Panc1 (cell line): ENCODE measurements at regions of chr10 and their contacts with region 1.

Region 1: DNA sequence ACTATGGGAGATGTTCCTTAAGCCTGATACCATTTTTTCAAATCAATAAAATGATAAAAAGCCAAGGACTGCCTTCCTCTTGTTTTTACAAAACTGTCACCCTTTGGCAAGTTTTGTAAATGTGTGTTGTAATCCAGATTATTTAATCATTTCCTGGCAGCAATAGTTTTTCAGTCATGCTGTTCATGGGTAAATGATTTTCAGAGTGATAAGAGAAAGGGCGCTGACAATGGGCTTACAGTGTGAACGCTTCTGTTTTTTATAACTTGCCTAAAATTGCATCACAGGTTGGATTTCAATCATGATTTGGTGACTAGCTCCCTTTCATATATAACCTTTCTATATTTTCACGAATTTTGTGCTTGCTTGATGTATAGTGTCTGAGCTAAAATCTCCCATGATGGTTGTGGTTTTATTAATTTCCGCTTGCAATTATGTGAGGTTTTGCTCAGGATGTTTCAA is 19.0 kb upstream of the DMBT1 start:
- DNase-seq: no peak
- ATAC-seq: no peak
- H3K4me3 ChIP-seq: no peak overlapping the region
- H3K27ac ChIP-seq: no peak overlapping the region
- H3K4me1 ChIP-seq: no peaks in the 10 kb centered on the region
- H3K27me3 ChIP-seq: peaks cover 9% of the 10 kb centered on the region
- CTCF ChIP-seq: no peak

Region 2: GRCh38 chr10:122504610-122504950 is 37.0 kb before region 1 on chr10:
- CTCF ChIA-PET with region 1: no interaction called
- POLR2A ChIA-PET with region 1: no interaction called
- in situ Hi-C with region 1: no loop called
- intact Hi-C with region 1: no loop called
- DNase-seq: no peak
- ATAC-seq: peak; percentile 52; the same call in 1 of the 2 replicates
- H3K4me3 ChIP-seq: no peak overlapping the region
- H3K27ac ChIP-seq: no peak overlapping the region
- H3K4me1 ChIP-seq: no peaks in the 10 kb centered on the region
- H3K27me3 ChIP-seq: no peaks in the 10 kb centered on the region
- CTCF ChIP-seq: no peak

Region 3: DNA sequence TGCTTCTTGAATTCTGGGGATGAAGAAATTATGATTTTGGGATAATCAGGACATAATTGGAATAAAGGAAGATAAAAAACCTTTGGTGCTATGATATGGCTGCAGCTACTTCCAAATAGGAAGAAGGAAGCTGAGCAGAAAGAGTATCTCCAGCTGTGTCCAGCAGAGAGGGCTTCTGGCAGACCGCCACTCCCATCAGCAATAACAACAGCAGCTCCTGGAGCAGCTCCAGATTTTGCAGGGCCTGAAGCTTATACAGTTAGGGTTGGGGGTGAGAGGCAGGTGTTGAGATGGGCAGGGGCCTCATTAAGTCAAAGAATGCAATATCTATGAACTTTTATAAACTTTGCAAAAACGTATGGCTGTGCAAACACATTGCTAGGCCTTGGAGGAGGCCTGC is 95.8 kb after region 1 on chr10:
- CTCF ChIA-PET with region 1: no interaction called
- POLR2A ChIA-PET with region 1: interaction called, 10 read pairs
- in situ Hi-C with region 1: no loop called
- intact Hi-C with region 1: no loop called
- DNase-seq: no peak
- ATAC-seq: no peak
- H3K4me3 ChIP-seq: no peak overlapping the region
- H3K27ac ChIP-seq: no peak overlapping the region
- H3K4me1 ChIP-seq: no peaks in the 10 kb centered on the region
- H3K27me3 ChIP-seq: peaks cover 3% of the 10 kb centered on the region
- CTCF ChIP-seq: no peak